ENCODE measurements at regions of chr12 and their contacts with region 1.

Region 1: GRCh38 chr12:12376646-12377448 is 20.0 kb downstream of the BORCS5 start:
- DNase-seq: peak in 1 of 2 donors; percentile 84
- ATAC-seq: peak; percentile 47 to 66 (median 48)
- H3K4me3 ChIP-seq: no peak overlapping the region
- H3K4me3 Mint-ChIP-seq: no peak overlapping the region
- H3K27ac ChIP-seq: no peak overlapping the region
- H3K27ac Mint-ChIP-seq: peak overlapping the region; percentile 42 to 76
- H3K4me1 ChIP-seq: peaks cover 27% of the 10 kb centered on the region
- H3K4me1 Mint-ChIP-seq: peaks cover 37 to 47% of the 10 kb centered on the region in 2 donors
- H3K27me3 ChIP-seq: no peaks in the 10 kb centered on the region
- H3K27me3 Mint-ChIP-seq: no peaks in the 10 kb centered on the region
- CTCF ChIP-seq: peak; percentile 77

Region 2: GRCh38 chr12:12282761-12283425 is 94.0 kb before region 1 on chr12:
- intact Hi-C with region 1: no loop called
- DNase-seq: no peak
- ATAC-seq: no peak
- H3K4me3 ChIP-seq: no peak overlapping the region
- H3K4me3 Mint-ChIP-seq: no peak overlapping the region
- H3K27ac ChIP-seq: no peak overlapping the region
- H3K27ac Mint-ChIP-seq: no peak overlapping the region
- H3K4me1 ChIP-seq: no peaks in the 10 kb centered on the region
- H3K4me1 Mint-ChIP-seq: no peaks in the 10 kb centered on the region
- H3K27me3 ChIP-seq: peaks cover 4% of the 10 kb centered on the region
- H3K27me3 Mint-ChIP-seq: peaks cover 20 to 35% of the 10 kb centered on the region in 2 donors
- CTCF ChIP-seq: no peak

Region 3: GRCh38 chr12:12474931-12475795 is 98.3 kb after region 1 on chr12:
- intact Hi-C with region 1: loop called (anchors 1 kb)
- DNase-seq: peak in 1 of 2 donors; percentile 77
- ATAC-seq: peak; percentile 87 to 90 (median 87)
- H3K4me3 ChIP-seq: no peak overlapping the region
- H3K4me3 Mint-ChIP-seq: no peak overlapping the region
- H3K27ac ChIP-seq: peak overlapping the region; percentile 62
- H3K27ac Mint-ChIP-seq: peak overlapping the region; percentile 48 to 87
- H3K4me1 ChIP-seq: peaks cover 13% of the 10 kb centered on the region
- H3K4me1 Mint-ChIP-seq: peaks cover 26 to 29% of the 10 kb centered on the region in 2 donors
- H3K27me3 ChIP-seq: no peaks in the 10 kb centered on the region
- H3K27me3 Mint-ChIP-seq: no peaks in the 10 kb centered on the region
- CTCF ChIP-seq: no peak

Region 4: GRCh38 chr12:12611512-12612306 is 234.9 kb after region 1 on chr12 and contains the start of gene CREBL2:
- intact Hi-C with region 1: loop called (anchors 2 kb)
- DNase-seq: peak; percentile 84 to 94
- ATAC-seq: peak; percentile 93 to 97 (median 94)
- H3K4me3 ChIP-seq: peak within 1 kb of the TSS; percentile 84
- H3K4me3 Mint-ChIP-seq: peak within 1 kb of the TSS; percentile 90
- H3K27ac ChIP-seq: peak within 1 kb of the TSS; percentile 87
- H3K27ac Mint-ChIP-seq: peak within 1 kb of the TSS; percentile 90 to 98
- H3K4me1 ChIP-seq: peaks cover 17% of the 10 kb centered on the region
- H3K4me1 Mint-ChIP-seq: peaks cover 34 to 36% of the 10 kb centered on the region in 2 donors
- H3K27me3 ChIP-seq: no peaks in the 10 kb centered on the region
- H3K27me3 Mint-ChIP-seq: no peaks in the 10 kb centered on the region
- CTCF ChIP-seq: no peak
- total RNA-seq, gene CREBL2: 9.0 to 13.1 (median 10.7) TPM

Region 5: DNA sequence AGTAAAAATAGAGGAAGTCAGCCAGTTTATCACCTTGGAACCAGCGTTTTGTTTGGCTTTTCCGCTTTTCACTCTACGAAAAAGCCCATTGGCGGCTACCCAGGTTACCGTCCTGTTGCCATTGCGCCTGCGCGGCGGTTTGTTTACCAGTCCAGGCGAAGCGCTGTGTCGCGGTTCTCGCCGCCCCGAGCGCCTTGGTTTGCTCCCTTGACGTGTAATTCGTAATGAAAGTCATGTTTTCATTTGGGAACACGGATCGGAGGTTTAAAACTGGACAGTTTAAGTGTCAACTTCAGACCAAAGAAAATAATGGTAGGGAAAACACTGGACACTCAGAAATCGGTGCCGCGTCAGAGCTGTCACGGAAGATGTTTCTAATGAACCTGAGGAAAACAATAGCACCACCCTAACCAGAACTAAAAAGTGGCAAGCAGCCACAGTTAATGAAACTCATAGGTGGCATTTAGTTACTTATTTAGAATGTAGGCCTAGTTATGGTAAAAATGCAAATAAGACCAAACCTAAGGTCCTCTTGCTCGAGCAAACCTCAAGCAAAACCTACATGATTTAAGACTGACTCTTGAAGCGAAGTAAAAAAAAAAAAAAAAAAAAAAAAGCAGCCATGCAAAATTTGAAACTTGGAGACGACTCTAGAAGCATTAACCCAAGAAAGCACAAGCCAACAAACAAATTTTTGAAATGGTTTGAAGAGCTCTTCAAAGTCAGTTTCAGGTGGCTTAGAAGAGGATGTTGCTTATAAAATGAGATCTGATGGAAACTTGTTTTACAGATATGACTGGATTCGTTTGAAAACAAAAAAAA is 319.9 kb after region 1 on chr12:
- intact Hi-C with region 1: loop called (anchors 2 kb)
- DNase-seq: peak; percentile 91 to 97
- ATAC-seq: peak; percentile 85 to 93 (median 89)
- H3K4me3 ChIP-seq: peak overlapping the region; percentile 68
- H3K4me3 Mint-ChIP-seq: peak overlapping the region; percentile 93
- H3K27ac ChIP-seq: peak overlapping the region; percentile 98
- H3K27ac Mint-ChIP-seq: peak overlapping the region; percentile 99 to 100
- H3K4me1 ChIP-seq: no peaks in the 10 kb centered on the region
- H3K4me1 Mint-ChIP-seq: peaks cover 26 to 27% of the 10 kb centered on the region in 2 donors
- H3K27me3 ChIP-seq: no peaks in the 10 kb centered on the region
- H3K27me3 Mint-ChIP-seq: no peaks in the 10 kb centered on the region
- CTCF ChIP-seq: no peak

Region 6: DNA sequence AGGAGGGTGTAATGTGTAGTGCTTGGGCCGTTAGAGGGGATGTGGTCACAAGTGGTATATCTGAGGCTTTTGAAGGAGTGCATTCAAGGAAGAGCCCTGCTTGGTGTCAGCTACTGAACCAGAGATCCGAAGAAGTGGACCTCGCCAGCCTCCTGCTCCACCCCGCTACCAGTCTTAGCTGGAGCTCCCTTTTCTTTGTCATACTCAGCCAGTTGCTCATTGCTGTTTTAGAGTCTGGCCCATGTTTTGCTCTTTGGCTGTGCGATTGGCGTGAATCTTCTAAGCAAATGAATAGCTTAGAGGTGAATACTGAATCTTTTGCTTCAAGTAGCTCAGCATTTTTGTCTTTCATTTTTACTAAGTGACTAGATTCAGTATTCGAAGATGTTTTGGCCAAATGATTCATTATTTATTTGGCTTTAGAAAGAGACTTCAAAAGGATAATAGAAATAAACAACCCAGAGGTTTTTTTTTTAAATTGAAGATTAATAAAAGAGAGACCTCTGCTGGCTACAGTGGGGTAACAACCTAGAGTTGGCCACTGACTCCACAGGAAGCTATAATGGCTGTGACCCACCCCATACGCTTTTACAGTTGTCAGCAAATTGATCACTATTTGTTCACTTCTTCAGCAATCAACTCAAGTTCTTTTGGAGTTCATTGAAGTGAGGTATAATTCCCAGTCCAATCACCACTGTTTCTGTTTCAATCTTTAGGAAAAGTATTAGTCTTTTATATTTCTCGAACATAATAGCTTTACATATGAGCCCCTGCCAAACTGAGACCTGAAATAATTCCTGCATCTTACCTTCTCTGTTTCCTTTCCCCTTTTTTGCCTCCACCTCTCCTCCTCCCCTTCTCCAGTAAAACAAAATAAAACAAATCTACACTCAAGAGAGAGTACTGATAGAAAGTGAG is 360.2 kb after region 1 on chr12:
- intact Hi-C with region 1: loop called (anchors 2 kb)
- DNase-seq: peak; percentile 59 to 80
- ATAC-seq: peak; percentile 85 to 93 (median 91)
- H3K4me3 ChIP-seq: peak overlapping the region; percentile 43
- H3K4me3 Mint-ChIP-seq: peak overlapping the region; percentile 77
- H3K27ac ChIP-seq: peak overlapping the region; percentile 92
- H3K27ac Mint-ChIP-seq: peak overlapping the region; percentile 94
- H3K4me1 ChIP-seq: peaks cover 30% of the 10 kb centered on the region
- H3K4me1 Mint-ChIP-seq: peaks cover 31% of the 10 kb centered on the region in 2 donors
- H3K27me3 ChIP-seq: no peaks in the 10 kb centered on the region
- H3K27me3 Mint-ChIP-seq: no peaks in the 10 kb centered on the region
- CTCF ChIP-seq: peak; percentile 73